HCT116 (cell line): ENCODE measurements at regions of chr17 and their contacts with region 1.

Region 1: GRCh38 chr17:2634361-2634960 is 41.0 kb downstream of the PAFAH1B1 start:
- DNase-seq: peak; percentile 93
- ATAC-seq: peak; percentile 95
- H3K4me3 ChIP-seq: 0 out of 4 replicates have a peak overlapping the region, but pooled peaks of 1 of the 2 experiments have one; percentile 20
- H3K27ac ChIP-seq: peak overlapping the region; percentile 78
- H3K4me1 ChIP-seq: peaks cover 44 to 57% of the 10 kb centered on the region in 2 experiments
- H3K27me3 ChIP-seq: no peaks in the 10 kb centered on the region
- CTCF ChIP-seq: no peak
- POLR2A ChIP-seq: no peak
- RAD21 ChIP-seq: no peak; the same call in 1 of the 2 replicates

Region 2: GRCh38 chr17:2592971-2593820 is 41.3 kb before region 1 on chr17 and contains the start of gene PAFAH1B1:
- CTCF ChIA-PET with region 1: no interaction called
- POLR2A ChIA-PET with region 1: no interaction called
- RAD21 ChIA-PET with region 1: no interaction called
- intact Hi-C with region 1: loop called (anchors 5 kb)
- DNase-seq: peak; percentile 56
- ATAC-seq: peak; percentile 89
- H3K4me3 ChIP-seq: peak within 1 kb of the TSS; percentile 73 to 78
- H3K27ac ChIP-seq: peak within 1 kb of the TSS; percentile 98
- H3K4me1 ChIP-seq: peaks cover 18 to 36% of the 10 kb centered on the region in 2 experiments
- H3K27me3 ChIP-seq: no peaks in the 10 kb centered on the region
- CTCF ChIP-seq: no peak
- POLR2A ChIP-seq: peak; percentile 77
- RAD21 ChIP-seq: no peak
- total RNA-seq, gene PAFAH1B1: 113 TPM